Naive thymus-derived CD4-positive, alpha-beta T cell (primary cell): ENCODE measurements at regions of chr3 and their contacts with region 1.

Region 1: GRCh38 chr3:14402304-14402811 is at the start of gene SLC6A6:
- DNase-seq: peak; percentile 86 to 95 (median 92)
- ATAC-seq: peak; percentile 89
- H3K4me3 ChIP-seq: peak within 1 kb of the TSS; percentile 100
- H3K4me3 Mint-ChIP-seq: peak within 1 kb of the TSS; percentile 91 to 100 (median 98)
- H3K27ac ChIP-seq: peak within 1 kb of the TSS; percentile 83
- H3K27ac Mint-ChIP-seq: peak within 1 kb of the TSS; percentile 89 to 98 (median 96)
- H3K4me1 ChIP-seq: peaks cover 20 to 27% of the 10 kb centered on the region in 2 donors
- H3K4me1 Mint-ChIP-seq: peaks cover 33 to 50% (median 44%) of the 10 kb centered on the region in 7 donors
- H3K27me3 ChIP-seq: no peaks in the 10 kb centered on the region
- H3K27me3 Mint-ChIP-seq: peaks cover 0 to 1% (median 0%) of the 10 kb centered on the region in 5 donors
- total RNA-seq, gene SLC6A6: 34.5 to 87.5 (median 35.6) TPM

Region 2: DNA sequence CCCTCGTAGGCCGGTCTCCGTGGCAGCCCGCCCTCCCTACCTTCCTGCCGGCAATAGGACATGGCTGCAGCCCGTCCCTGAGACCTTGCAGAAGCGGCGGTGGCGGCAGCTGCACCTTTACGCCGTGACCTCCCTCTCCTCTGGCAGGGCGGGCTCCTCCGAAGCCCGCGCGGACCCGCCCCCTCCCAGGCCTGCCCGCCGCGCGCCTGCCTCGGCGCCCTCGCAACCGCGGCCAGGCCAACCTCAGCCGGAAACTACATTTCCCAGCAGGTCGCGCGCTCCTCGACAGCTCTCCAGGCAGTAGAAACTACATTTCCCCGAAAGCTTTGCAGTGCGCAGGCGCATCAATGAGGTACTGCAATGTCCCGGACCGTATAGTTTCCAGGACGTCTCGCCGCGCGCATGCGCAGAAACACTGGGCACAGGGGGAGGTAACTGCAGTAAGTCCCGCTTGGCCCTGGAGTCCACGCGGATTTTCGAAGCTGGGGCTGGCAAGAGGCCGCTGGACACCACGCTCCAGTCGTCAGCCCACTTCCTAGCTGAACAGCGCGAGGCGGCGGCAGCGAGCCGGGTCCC is 277.7 kb before region 1 on chr3 and contains the starts of genes CHCHD4 and TMEM43:
- CTCF ChIA-PET with region 1: no interaction called
- POLR2A ChIA-PET with region 1: interaction called, 4 read pairs
- intact Hi-C with region 1: loop called (anchors 1 kb)
- DNase-seq: peak; percentile 91 to 99 (median 98)
- ATAC-seq: peak; percentile 96
- H3K4me3 ChIP-seq: peak within 1 kb of the TSS; percentile 100
- H3K4me3 Mint-ChIP-seq: peak within 1 kb of the TSS; percentile 93 to 98 (median 96)
- H3K27ac ChIP-seq: peak within 1 kb of the TSS; percentile 89
- H3K27ac Mint-ChIP-seq: peak within 1 kb of the TSS; percentile 87 to 97 (median 94)
- H3K4me1 ChIP-seq: peaks cover 28 to 30% of the 10 kb centered on the region in 2 donors
- H3K4me1 Mint-ChIP-seq: peaks cover 43 to 70% (median 63%) of the 10 kb centered on the region in 7 donors
- H3K27me3 ChIP-seq: no peaks in the 10 kb centered on the region
- H3K27me3 Mint-ChIP-seq: no peaks in the 10 kb centered on the region
- total RNA-seq, gene CHCHD4: 3.3 to 14.1 (median 8.4) TPM
- total RNA-seq, gene TMEM43: 30.1 to 54.8 (median 46.5) TPM

Region 3: DNA sequence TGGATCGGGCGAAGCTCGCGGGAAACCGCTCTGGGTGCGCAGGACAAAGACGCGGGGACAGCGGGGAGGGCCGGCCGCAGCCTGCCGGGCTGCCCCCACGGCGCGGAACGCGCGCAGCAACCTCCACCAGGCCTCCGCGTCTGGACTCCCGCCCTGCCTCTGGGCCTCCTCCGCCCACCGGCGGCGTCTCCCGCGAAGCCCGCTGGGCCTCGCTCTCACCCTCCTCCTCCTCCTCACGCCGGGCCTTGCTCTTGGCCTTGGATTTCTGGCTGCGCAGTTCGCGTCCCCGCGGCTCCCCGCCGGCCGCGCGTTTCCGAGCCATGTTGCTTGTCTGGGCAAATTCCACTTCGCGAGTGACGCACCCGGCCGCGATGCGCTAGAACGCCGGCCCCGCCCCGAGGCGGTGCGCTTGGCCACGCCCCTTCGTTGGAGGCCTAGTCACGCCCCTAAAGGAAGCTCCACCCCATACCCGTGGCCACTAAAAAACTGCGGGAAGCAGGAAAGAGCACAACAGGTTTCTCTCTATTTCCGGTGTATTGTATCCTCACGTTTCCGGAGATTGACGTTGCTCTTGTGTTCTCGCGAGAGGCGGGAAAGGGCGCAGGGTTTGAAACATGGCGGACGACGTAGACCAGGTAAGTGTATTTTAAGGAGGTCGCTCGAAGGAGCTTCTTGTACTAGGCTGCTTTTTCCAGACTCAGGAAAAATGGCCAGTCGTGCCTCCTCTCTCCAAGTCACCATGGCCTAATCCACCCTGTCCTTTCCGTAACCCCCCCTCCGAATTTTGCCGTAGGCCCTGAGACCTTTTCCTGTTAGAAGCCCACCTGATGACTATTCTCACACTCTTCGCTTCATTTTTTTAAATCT is 223.9 kb before region 1 on chr3 and contains the starts of genes LSM3 and XPC:
- CTCF ChIA-PET with region 1: no interaction called
- POLR2A ChIA-PET with region 1: interaction called, 13 read pairs
- intact Hi-C with region 1: loop called (anchors 1 kb)
- DNase-seq: peak; percentile 98 to 100 (median 99)
- ATAC-seq: peak; percentile 98
- H3K4me3 ChIP-seq: peak within 1 kb of the TSS; percentile 68
- H3K4me3 Mint-ChIP-seq: peak within 1 kb of the TSS; percentile 94 to 100 (median 98)
- H3K27ac ChIP-seq: peak within 1 kb of the TSS; percentile 99
- H3K27ac Mint-ChIP-seq: peak within 1 kb of the TSS; percentile 96 to 100 (median 99)
- H3K4me1 ChIP-seq: peaks cover 37 to 48% of the 10 kb centered on the region in 2 donors
- H3K4me1 Mint-ChIP-seq: peaks cover 45 to 85% (median 82%) of the 10 kb centered on the region in 7 donors
- H3K27me3 ChIP-seq: no peaks in the 10 kb centered on the region
- H3K27me3 Mint-ChIP-seq: peaks cover 0 to 2% (median 0%) of the 10 kb centered on the region in 5 donors
- total RNA-seq, gene LSM3: 6.0 to 14.1 (median 8.0) TPM
- total RNA-seq, gene XPC: 56.3 to 94.8 (median 78.1) TPM

Region 4: GRCh38 chr3:14377348-14378169 is 24.8 kb before region 1 on chr3:
- CTCF ChIA-PET with region 1: no interaction called
- POLR2A ChIA-PET with region 1: no interaction called
- intact Hi-C with region 1: loop called in 1 of 2 experiments (anchors 2 kb)
- DNase-seq: peak in 2 of 9 donors; percentile 13 to 23
- ATAC-seq: peak; percentile 94
- H3K4me3 ChIP-seq: no peak overlapping the region
- H3K4me3 Mint-ChIP-seq: peak overlapping the region in 3 of 10 donors; percentile 15 to 70 (median 19)
- H3K27ac ChIP-seq: no peak overlapping the region
- H3K27ac Mint-ChIP-seq: peak overlapping the region in 8 of 9 donors; percentile 9 to 89 (median 52)
- H3K4me1 ChIP-seq: peaks cover 11 to 21% of the 10 kb centered on the region in 2 donors
- H3K4me1 Mint-ChIP-seq: peaks cover 12 to 19% (median 16%) of the 10 kb centered on the region in 7 donors
- H3K27me3 ChIP-seq: no peaks in the 10 kb centered on the region
- H3K27me3 Mint-ChIP-seq: peaks cover 0 to 4% (median 0%) of the 10 kb centered on the region in 5 donors

Region 5: GRCh38 chr3:14431892-14432834 is 29.8 kb after region 1 on chr3:
- CTCF ChIA-PET with region 1: interaction called, 10 read pairs
- POLR2A ChIA-PET with region 1: interaction called, 23 read pairs
- intact Hi-C with region 1: loop called (anchors 1 kb)
- DNase-seq: peak; percentile 73 to 94 (median 91)
- ATAC-seq: peak; percentile 89
- H3K4me3 ChIP-seq: peak overlapping the region; percentile 53
- H3K4me3 Mint-ChIP-seq: peak overlapping the region; percentile 51 to 90 (median 78)
- H3K27ac ChIP-seq: peak overlapping the region; percentile 84
- H3K27ac Mint-ChIP-seq: peak overlapping the region; percentile 87 to 100 (median 98)
- H3K4me1 ChIP-seq: peaks cover 55 to 81% of the 10 kb centered on the region in 2 donors
- H3K4me1 Mint-ChIP-seq: peaks cover 57 to 85% (median 75%) of the 10 kb centered on the region in 7 donors
- H3K27me3 ChIP-seq: no peaks in the 10 kb centered on the region
- H3K27me3 Mint-ChIP-seq: no peaks in the 10 kb centered on the region

Region 6: DNA sequence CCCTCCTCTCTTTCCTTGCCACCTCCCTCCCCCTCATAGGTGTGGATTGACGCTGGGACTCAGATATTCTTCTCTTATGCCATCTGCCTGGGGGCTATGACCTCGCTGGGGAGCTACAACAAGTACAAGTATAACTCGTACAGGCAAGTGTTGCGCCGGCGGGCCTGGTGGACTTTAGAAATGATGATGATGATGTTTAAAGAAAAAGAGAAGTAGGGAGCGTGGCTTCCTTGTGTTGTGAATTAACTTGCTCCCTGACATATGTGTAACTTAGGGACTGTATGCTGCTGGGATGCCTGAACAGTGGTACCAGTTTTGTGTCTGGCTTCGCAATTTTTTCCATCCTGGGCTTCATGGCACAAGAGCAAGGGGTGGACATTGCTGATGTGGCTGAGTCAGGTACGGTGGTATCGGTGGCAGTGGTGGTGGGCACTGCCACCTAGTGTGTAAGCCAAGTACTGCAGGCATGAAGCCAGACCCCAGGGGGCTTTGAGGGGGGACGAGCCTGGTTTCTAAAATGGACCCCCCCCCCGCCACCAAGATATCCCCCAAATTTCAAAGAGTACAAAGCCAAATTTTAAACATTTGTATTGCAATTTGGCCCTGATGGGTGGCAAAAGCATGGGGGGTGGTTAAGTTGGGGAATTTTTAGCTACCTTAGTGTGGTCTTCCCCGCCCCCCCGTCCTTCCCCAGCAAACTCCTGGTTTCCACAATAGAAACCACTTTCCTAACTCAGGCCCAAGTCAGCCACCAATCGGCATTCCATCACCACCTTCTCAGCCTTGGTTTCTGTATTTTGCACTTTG is 65.7 kb after region 1 on chr3:
- CTCF ChIA-PET with region 1: interaction called, 5 read pairs
- POLR2A ChIA-PET with region 1: interaction called, 3 read pairs
- intact Hi-C with region 1: loop called (anchors 1 kb)
- DNase-seq: peak; percentile 18 to 63 (median 40)
- ATAC-seq: peak; percentile 77
- H3K4me3 ChIP-seq: no peak overlapping the region
- H3K4me3 Mint-ChIP-seq: no peak overlapping the region
- H3K27ac ChIP-seq: no peak overlapping the region
- H3K27ac Mint-ChIP-seq: peak overlapping the region in 2 of 9 donors; percentile 56 to 75
- H3K4me1 ChIP-seq: no peaks in the 10 kb centered on the region
- H3K4me1 Mint-ChIP-seq: peaks cover 0 to 6% (median 0%) of the 10 kb centered on the region in 7 donors
- H3K27me3 ChIP-seq: no peaks in the 10 kb centered on the region
- H3K27me3 Mint-ChIP-seq: no peaks in the 10 kb centered on the region

Region 7: GRCh38 chr3:15859507-15860013 is 1457.2 kb after region 1 on chr3:
- CTCF ChIA-PET with region 1: no interaction called
- POLR2A ChIA-PET with region 1: no interaction called
- intact Hi-C with region 1: loop called in 1 of 2 experiments (anchors 5 kb)
- DNase-seq: peak; percentile 57 to 86 (median 71)
- ATAC-seq: peak; percentile 91
- H3K4me3 ChIP-seq: peak overlapping the region; percentile 63
- H3K4me3 Mint-ChIP-seq: peak overlapping the region; percentile 85 to 99 (median 95)
- H3K27ac ChIP-seq: peak overlapping the region; percentile 77
- H3K27ac Mint-ChIP-seq: peak overlapping the region in 6 of 9 donors; percentile 76 to 98 (median 92)
- H3K4me1 ChIP-seq: peaks cover 12 to 14% of the 10 kb centered on the region in 2 donors
- H3K4me1 Mint-ChIP-seq: peaks cover 21 to 50% (median 43%) of the 10 kb centered on the region in 7 donors
- H3K27me3 ChIP-seq: no peaks in the 10 kb centered on the region
- H3K27me3 Mint-ChIP-seq: peaks cover 0 to 10% (median 0%) of the 10 kb centered on the region in 5 donors